Activated CD4-positive, alpha-beta T cell treated with anti-CD3 and anti-CD28 coated beads for 36 hours (primary cell): ENCODE measurements at regions of chr3 and their contacts with region 1.

Region 1: DNA sequence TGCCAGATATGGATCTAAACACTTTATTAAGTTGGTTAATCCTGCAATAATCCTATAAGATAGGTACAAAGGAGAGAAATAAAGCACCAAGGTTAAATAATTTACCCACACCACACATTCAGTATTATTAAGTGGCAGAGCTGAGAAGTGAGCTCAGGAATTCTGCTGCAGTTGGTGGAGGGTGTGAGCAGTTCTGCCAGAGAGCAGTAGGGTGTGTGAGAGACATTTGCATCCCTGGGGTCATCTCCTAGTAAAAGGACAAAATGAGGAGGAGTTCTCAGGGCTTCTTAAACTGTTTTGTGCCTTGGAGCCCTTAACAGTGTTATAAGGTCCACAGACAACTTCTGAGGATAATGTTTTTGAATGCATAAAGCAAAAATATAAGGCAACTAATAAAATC is 484.5 kb downstream of the TAFA4 start:
- DNase-seq: no peak
- ATAC-seq: no peak
- H3K4me3 Mint-ChIP-seq: no peak overlapping the region
- H3K27ac Mint-ChIP-seq: no peak overlapping the region
- H3K4me1 Mint-ChIP-seq: no peaks in the 10 kb centered on the region
- H3K27me3 Mint-ChIP-seq: no peaks in the 10 kb centered on the region

Region 2: GRCh38 chr3:66593964-66594363 is 1853.9 kb before region 1 on chr3:
- CTCF ChIA-PET with region 1: no interaction called
- POLR2A ChIA-PET with region 1: no interaction called
- intact Hi-C with region 1: loop called in 1 of 2 experiments (anchors 10 kb)
- DNase-seq: no peak
- ATAC-seq: no peak
- H3K4me3 Mint-ChIP-seq: no peak overlapping the region
- H3K27ac Mint-ChIP-seq: no peak overlapping the region
- H3K4me1 Mint-ChIP-seq: peaks cover 2% of the 10 kb centered on the region
- H3K27me3 Mint-ChIP-seq: peaks cover 5% of the 10 kb centered on the region